Ovary (tissue), 10 donors: ENCODE measurements at regions of chr1 and their contacts with region 1.

Region 1: DNA sequence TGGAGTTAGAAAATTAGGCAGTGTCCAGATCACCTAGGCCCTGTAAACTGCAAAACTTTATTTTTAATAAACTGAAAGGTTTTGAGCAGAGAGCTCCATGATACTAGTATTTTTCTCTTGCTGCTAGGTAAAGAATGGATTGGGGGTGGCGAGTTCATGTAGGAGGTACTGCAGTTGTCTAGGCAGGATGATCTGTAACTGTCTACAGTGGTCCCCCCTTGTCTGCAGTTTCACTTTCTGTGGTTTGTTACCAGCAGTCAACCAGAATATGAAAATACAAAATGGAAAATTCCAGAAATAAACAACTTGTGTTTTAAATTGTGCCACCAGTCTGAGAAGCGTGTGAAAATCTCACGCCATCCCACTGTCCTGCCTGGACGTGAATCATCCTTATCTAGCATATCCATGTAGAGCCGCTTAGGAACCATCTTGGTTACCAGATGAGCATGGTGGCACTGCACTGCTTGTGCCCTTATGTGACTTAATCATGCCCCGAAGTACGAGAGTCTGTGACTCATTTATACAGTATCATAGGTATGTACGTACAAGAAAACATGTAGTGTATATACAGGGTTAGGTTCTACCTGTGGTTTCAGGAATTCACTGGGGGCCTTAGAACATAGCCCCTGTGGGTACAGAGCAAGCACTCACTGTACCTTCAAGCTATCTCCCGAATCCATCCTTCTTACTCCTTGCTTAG is 94.2 kb downstream of the AHCTF1 start:
- DNase-seq: no peak
- H3K4me3 ChIP-seq: no peak overlapping the region
- H3K27ac ChIP-seq: no peak overlapping the region
- H3K4me1 ChIP-seq: no peaks in the 10 kb centered on the region
- H3K27me3 ChIP-seq: no peaks in the 10 kb centered on the region
- CTCF ChIP-seq: no peak
- EP300 ChIP-seq: no peak
- POLR2A ChIP-seq: no peak

Region 2: DNA sequence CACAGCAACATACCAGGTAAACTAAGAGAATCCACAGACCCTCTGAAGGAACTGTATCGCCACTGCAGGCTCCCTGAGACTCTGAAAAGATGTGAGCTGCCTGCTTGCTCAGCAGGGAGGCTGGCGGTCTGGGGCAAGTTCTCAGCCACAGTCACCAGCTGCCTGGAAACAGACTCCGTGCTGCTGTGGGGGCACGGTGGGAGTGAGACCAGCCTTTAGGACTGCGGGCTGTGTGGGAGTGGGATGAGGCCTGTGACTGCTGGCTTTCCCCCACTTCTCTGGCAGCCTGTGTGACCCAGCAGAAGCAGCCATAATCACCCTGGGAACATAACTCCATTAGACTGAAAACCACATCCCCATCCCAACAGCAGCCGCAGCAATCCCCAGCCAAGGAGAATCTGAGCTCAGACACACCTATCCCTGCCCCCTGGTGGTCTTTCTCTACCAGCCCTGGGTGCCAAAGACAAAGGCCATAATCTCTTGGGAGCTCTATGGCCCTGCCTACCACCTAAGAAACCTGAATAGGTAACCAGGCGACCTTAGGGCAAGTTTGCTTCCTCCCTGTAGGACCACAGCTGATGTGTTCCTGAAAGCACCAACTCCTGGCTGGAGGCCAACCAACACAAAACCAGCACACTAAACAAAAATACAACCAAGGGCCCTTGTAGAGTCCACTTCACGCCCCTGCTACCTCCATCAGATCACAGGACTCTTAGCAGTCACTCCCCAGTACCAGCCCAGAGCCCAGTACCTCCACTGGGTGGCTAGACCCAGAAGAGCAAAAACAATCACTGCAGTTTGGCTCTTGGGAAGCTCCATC is 481.9 kb before region 1 on chr1:
- intact Hi-C with region 1: no loop called
- DNase-seq: no peak
- H3K4me3 ChIP-seq: no peak overlapping the region
- H3K27ac ChIP-seq: no peak overlapping the region
- H3K4me1 ChIP-seq: no peaks in the 10 kb centered on the region
- H3K27me3 ChIP-seq: no peaks in the 10 kb centered on the region
- CTCF ChIP-seq: no peak
- EP300 ChIP-seq: no peak
- POLR2A ChIP-seq: no peak

Region 3: DNA sequence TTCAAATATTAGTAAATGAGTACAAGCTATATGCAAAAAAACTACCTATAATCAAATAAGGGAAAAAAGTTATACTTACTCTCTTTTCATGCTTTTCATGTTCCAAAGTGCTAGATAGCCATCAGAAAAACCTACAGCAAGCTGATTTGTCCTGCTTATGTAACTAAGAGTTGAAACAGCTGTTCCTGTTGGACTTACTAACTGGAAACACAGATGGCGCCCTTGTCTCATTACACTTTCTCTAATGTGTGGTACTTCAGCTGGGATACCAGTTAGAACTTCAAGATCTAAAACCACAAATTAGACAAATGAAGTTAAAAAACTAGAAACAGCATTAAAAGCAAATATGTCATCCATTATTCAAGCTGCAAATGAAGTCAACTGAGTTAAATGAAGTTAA is 69.9 kb after region 1 on chr1:
- intact Hi-C with region 1: loop called in 1 of 4 experiments (anchors 10 kb)
- DNase-seq: peak in 1 of 5 donors; percentile 35
- H3K4me3 ChIP-seq: no peak overlapping the region
- H3K27ac ChIP-seq: no peak overlapping the region
- H3K4me1 ChIP-seq: no peaks in the 10 kb centered on the region
- H3K27me3 ChIP-seq: no peaks in the 10 kb centered on the region
- CTCF ChIP-seq: peak in 1 of 3 donors; percentile 13
- EP300 ChIP-seq: no peak
- POLR2A ChIP-seq: no peak